Activated naive CD8-positive, alpha-beta T cell treated with anti-CD3 and anti-CD28 coated beads, Interleukin-2, amount 10 ng/mL, durations not matched to agents 7 days and 5 days (primary cell): ENCODE measurements at regions of chr11 and their contacts with region 1.

Region 1: DNA sequence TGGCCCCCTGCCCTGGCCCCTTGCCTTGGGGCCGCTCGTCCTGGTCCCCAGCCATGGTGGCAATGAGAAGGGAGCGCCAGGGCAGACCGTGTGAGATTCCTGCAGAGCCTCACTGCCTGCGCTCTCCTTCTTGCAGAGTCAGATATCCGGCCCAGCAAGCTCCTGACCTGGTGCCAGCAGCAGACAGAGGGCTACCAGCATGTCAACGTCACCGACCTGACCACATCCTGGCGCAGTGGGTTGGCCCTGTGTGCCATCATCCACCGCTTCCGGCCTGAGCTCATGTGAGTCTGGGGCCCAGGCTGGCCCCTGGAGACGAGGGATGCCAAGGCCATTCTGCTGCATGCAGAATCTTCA is 114.1 kb downstream of the MICAL2 start:
- DNase-seq: peak; percentile 89
- ATAC-seq: peak; percentile 95
- H3K4me3 Mint-ChIP-seq: peak overlapping the region; percentile 66
- H3K27ac Mint-ChIP-seq: peak overlapping the region; percentile 88
- H3K4me1 Mint-ChIP-seq: peaks cover 32% of the 10 kb centered on the region
- H3K27me3 Mint-ChIP-seq: no peaks in the 10 kb centered on the region

Region 2: GRCh38 chr11:12019337-12019736 is 205.2 kb before region 1 on chr11:
- POLR2A ChIA-PET with region 1: no interaction called
- DNase-seq: no peak
- ATAC-seq: no peak
- H3K4me3 Mint-ChIP-seq: no peak overlapping the region
- H3K27ac Mint-ChIP-seq: no peak overlapping the region
- H3K4me1 Mint-ChIP-seq: no peaks in the 10 kb centered on the region
- H3K27me3 Mint-ChIP-seq: peaks cover 29% of the 10 kb centered on the region

Region 3: GRCh38 chr11:12087075-12088004 is 137.2 kb before region 1 on chr11:
- POLR2A ChIA-PET with region 1: interaction called, 17 read pairs
- DNase-seq: peak; percentile 51
- ATAC-seq: peak; percentile 86
- H3K4me3 Mint-ChIP-seq: peak overlapping the region; percentile 55
- H3K27ac Mint-ChIP-seq: peak overlapping the region; percentile 92
- H3K4me1 Mint-ChIP-seq: peaks cover 60% of the 10 kb centered on the region
- H3K27me3 Mint-ChIP-seq: peaks cover 3% of the 10 kb centered on the region

Region 4: DNA sequence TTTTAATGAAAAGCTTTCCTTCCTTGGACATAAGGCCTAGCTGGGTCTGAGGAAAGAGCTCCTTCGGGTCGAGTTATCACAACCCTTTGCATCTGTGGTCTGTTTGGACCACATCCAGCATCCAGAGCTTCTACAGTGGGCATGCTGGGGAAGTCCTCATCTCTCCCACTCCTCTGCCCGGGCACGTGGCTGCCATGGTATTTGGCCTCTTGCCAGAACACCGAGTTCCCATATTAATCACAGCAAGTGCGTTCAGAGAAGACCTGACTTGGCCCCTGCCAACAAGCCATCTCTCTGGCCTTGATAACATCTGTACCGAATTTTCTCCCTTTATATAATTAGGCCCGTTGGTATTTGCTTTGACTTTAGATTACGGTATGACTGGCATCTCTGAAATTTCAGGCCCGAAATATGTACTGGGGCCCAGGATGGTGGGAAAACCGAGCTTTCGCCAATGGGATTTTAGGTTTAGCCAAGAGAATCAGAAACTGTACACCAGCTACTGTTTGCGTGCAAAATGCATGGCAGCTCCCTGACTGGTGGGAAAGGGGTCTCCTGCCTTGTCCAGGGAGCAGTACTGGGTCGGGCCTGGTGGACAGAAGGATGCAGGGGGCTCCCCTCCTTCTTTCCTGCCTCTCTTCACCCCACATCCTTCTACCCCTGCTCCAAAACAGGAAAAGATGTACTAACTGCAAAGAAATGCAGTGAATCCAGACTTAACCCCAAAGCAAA is 24.1 kb before region 1 on chr11:
- POLR2A ChIA-PET with region 1: interaction called, 41 read pairs
- DNase-seq: no peak
- ATAC-seq: no peak
- H3K4me3 Mint-ChIP-seq: no peak overlapping the region
- H3K27ac Mint-ChIP-seq: no peak overlapping the region
- H3K4me1 Mint-ChIP-seq: peaks cover 37% of the 10 kb centered on the region
- H3K27me3 Mint-ChIP-seq: no peaks in the 10 kb centered on the region

Region 5: GRCh38 chr11:12235947-12236743 is 11.6 kb after region 1 on chr11:
- POLR2A ChIA-PET with region 1: interaction called, 22 read pairs
- DNase-seq: peak; percentile 66
- ATAC-seq: peak; percentile 86
- H3K4me3 Mint-ChIP-seq: peak overlapping the region; percentile 66
- H3K27ac Mint-ChIP-seq: peak overlapping the region; percentile 86
- H3K4me1 Mint-ChIP-seq: peaks cover 23% of the 10 kb centered on the region
- H3K27me3 Mint-ChIP-seq: no peaks in the 10 kb centered on the region

Region 6: GRCh38 chr11:12361682-12362081 is 137.2 kb after region 1 on chr11:
- POLR2A ChIA-PET with region 1: no interaction called
- DNase-seq: no peak
- ATAC-seq: no peak
- H3K4me3 Mint-ChIP-seq: no peak overlapping the region
- H3K27ac Mint-ChIP-seq: no peak overlapping the region
- H3K4me1 Mint-ChIP-seq: peaks cover 12% of the 10 kb centered on the region
- H3K27me3 Mint-ChIP-seq: peaks cover 3% of the 10 kb centered on the region